OCI-LY7 (cell line): ENCODE measurements at regions of chr9 and their contacts with region 1.

Region 1: DNA sequence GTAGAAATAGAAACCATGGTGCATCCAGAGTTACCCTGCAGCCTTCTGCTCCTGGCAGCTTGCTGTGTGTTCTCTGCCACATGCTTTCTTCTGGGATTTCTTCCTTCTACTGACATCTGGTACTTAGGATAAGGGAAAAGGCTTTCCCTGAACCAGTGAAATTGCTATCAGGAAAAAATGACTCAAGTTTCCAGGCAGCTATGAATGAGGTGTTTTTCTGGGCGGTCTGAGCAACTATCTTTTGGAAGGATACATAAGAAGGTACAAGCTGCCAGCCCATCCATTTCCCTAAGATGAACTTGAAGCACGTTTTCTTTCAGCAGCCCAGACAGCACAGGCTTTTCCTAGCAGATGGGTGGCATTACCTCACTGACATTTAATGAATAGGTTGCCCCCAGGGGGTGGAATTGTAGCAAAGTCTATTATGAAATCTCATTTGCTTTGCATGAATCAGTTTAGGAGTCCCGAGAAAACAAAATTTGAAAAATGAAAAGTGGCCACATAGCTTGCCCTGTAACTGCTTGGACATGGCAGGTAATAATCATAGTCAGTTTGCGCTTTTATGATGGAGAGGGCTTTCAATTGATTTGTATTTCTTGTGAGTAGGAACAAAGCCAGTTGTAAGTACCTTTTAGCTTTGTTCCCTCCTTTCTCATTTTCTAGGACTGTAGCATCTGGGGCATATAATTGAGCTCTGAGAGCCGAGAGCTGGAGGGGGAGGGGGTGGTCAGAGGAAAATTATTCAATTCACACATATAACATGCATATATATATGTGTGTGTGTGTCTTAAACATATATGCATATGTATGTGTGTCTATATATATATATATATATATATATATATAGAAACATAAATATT is 108.5 kb downstream of the C9orf152 start:
- DNase-seq: peak; percentile 47
- H3K4me3 ChIP-seq: peak overlapping the region; percentile 4
- H3K27ac ChIP-seq: peak overlapping the region; percentile 79
- H3K4me1 ChIP-seq: peaks cover 67% of the 10 kb centered on the region
- CTCF ChIP-seq: peak; percentile 47

Region 2: DNA sequence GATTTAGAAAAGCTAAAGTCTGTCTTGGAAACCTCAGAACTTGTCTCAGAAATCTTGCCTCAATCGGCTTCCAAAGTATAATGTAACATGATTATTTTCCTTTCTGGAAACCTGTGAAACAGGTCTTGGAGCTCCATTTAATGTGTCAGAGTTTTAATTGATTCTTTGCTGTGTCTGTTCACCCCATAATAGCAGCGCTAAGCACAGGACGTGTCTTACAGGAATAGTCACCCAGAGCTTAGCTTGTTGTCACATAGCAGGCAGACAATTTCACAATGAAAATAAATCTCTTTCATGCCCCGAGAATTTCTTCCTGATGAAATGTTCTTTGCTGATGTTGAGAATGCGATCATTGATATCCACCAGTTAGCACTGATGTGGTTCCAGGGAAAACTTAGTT is 561.1 kb before region 1 on chr9:
- CTCF ChIA-PET with region 1: no interaction called
- POLR2A ChIA-PET with region 1: no interaction called
- intact Hi-C with region 1: no loop called
- DNase-seq: no peak
- H3K4me3 ChIP-seq: no peak overlapping the region
- H3K27ac ChIP-seq: no peak overlapping the region
- H3K4me1 ChIP-seq: no peaks in the 10 kb centered on the region
- CTCF ChIP-seq: no peak

Region 3: GRCh38 chr9:109972026-109972882 is 127.2 kb before region 1 on chr9:
- CTCF ChIA-PET with region 1: interaction called, 4 read pairs
- POLR2A ChIA-PET with region 1: interaction called, 4 read pairs
- intact Hi-C with region 1: loop called (anchors 1 kb)
- DNase-seq: peak; percentile 94
- H3K4me3 ChIP-seq: peak overlapping the region; percentile 37
- H3K27ac ChIP-seq: peak overlapping the region; percentile 98
- H3K4me1 ChIP-seq: peaks cover 100% of the 10 kb centered on the region
- CTCF ChIP-seq: peak; percentile 87

Region 4: GRCh38 chr9:110110154-110110553 is 10.7 kb after region 1 on chr9:
- CTCF ChIA-PET with region 1: interaction called, 4 read pairs
- POLR2A ChIA-PET with region 1: interaction called, 37 read pairs
- intact Hi-C with region 1: no loop called
- DNase-seq: peak; percentile 72
- H3K4me3 ChIP-seq: peak overlapping the region; percentile 46
- H3K27ac ChIP-seq: peak overlapping the region; percentile 64
- H3K4me1 ChIP-seq: peaks cover 79% of the 10 kb centered on the region
- CTCF ChIP-seq: no peak